Activated T-helper 2 cell treated with anti-CD3 and anti-CD28 coated beads, Interferon-gamma antibody, Interleukin-2, Interleukin-4, amounts not matched to agents 10 μg/mL and 5 μg/mL and 100 μg/mL, durations not matched to agents 14 hours and 24 hours and 36 hours (primary cell): ENCODE measurements at regions of chr5 and their contacts with region 1.

Region 1: GRCh38 chr5:82165740-82166530 is 112.2 kb downstream of the RPS23 start:
- DNase-seq: no peak
- H3K4me3 Mint-ChIP-seq: no peak overlapping the region
- H3K27ac Mint-ChIP-seq: no peak overlapping the region
- H3K4me1 Mint-ChIP-seq: peaks cover 7% of the 10 kb centered on the region
- H3K27me3 Mint-ChIP-seq: no peaks in the 10 kb centered on the region

Region 2: GRCh38 chr5:81425569-81425968 is 740.4 kb before region 1 on chr5:
- intact Hi-C with region 1: loop called (anchors 1 kb)
- DNase-seq: no peak
- H3K4me3 Mint-ChIP-seq: no peak overlapping the region
- H3K27ac Mint-ChIP-seq: no peak overlapping the region
- H3K4me1 Mint-ChIP-seq: peaks cover 35% of the 10 kb centered on the region
- H3K27me3 Mint-ChIP-seq: no peaks in the 10 kb centered on the region

Region 3: DNA sequence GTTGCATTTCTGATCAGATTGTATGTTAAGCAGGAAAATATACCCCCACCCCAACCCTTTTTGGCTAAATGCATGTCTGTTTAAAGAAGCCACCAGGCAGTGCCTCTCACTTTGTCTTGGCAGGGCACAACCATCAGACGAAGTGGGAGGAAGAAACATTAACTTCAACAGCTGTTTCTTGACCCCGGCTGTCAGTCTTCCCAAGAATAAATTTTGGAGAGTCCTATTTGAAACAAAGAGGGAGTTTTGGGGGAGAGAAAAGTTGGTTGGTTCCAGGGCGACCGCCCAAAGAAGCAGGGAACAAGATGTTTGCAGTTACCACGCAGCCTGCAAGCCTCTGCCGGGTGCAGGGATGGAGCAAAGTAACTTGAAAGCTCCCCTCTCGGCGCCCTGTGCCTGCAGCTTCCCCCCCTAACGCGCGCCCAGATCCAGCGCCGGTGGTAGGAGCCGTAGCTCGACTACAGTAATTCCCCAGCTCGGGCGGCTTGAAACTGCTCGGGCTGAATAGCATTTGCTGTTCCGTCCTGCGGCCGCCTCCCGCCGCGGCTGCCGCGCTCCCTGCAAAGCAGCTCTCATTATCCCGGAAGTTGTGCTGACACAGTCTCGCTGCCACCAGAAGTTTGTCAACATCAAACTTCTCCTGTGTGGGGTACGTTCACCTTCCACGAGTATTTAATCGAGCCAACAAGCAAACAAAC is 314.3 kb before region 1 on chr5:
- intact Hi-C with region 1: loop called (anchors 10 kb)
- DNase-seq: peak; percentile 88
- H3K4me3 Mint-ChIP-seq: peak overlapping the region; percentile 85
- H3K27ac Mint-ChIP-seq: peak overlapping the region; percentile 94
- H3K4me1 Mint-ChIP-seq: peaks cover 38% of the 10 kb centered on the region
- H3K27me3 Mint-ChIP-seq: no peaks in the 10 kb centered on the region

Region 4: DNA sequence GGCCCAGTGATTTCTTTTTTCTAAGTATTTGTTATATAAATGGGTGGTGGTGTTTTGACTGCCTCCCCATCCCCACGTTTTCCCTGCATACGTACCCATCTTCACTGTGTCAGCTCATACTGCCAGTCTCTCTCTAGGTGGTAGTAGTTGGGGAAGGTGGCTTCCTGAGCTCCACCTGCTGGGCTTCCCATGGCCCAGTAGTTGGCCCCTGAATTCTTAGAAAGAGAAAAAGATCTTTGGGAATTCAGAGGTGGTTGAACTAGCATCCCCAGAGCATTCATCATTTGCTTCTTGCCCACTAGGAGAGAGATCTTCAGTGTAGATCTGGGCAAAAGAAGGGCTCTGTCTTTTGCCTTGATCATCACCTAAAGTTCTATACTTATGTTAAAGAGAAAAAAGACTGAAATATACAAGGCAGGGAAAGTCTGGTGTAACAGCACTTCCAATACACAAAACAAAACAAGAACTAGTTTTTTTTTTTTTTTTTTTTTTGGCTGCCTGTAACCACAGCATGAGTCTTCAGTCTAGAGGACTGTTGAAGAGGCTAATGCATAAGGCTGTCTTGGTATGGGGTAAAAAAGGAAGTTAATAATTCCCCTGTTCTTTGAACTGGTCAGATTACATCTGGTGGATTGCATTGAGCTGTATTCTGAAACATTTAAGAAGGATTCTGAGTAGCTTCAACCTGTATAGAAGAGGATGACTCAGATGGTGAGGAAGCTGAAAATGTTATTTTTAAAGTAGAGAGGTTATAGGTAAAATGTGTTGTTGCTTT is 65.4 kb before region 1 on chr5:
- intact Hi-C with region 1: loop called (anchors 5 kb)
- DNase-seq: no peak
- H3K4me3 Mint-ChIP-seq: no peak overlapping the region
- H3K27ac Mint-ChIP-seq: peak overlapping the region; percentile 7
- H3K4me1 Mint-ChIP-seq: peaks cover 34% of the 10 kb centered on the region
- H3K27me3 Mint-ChIP-seq: no peaks in the 10 kb centered on the region

Region 5: GRCh38 chr5:82147865-82148573 is 17.9 kb before region 1 on chr5:
- intact Hi-C with region 1: no loop called
- DNase-seq: no peak
- H3K4me3 Mint-ChIP-seq: no peak overlapping the region
- H3K27ac Mint-ChIP-seq: no peak overlapping the region
- H3K4me1 Mint-ChIP-seq: no peaks in the 10 kb centered on the region
- H3K27me3 Mint-ChIP-seq: no peaks in the 10 kb centered on the region